Thyroid gland (tissue), 4 donors: ENCODE measurements at regions of chr9 and their contacts with region 1.

Region 1: DNA sequence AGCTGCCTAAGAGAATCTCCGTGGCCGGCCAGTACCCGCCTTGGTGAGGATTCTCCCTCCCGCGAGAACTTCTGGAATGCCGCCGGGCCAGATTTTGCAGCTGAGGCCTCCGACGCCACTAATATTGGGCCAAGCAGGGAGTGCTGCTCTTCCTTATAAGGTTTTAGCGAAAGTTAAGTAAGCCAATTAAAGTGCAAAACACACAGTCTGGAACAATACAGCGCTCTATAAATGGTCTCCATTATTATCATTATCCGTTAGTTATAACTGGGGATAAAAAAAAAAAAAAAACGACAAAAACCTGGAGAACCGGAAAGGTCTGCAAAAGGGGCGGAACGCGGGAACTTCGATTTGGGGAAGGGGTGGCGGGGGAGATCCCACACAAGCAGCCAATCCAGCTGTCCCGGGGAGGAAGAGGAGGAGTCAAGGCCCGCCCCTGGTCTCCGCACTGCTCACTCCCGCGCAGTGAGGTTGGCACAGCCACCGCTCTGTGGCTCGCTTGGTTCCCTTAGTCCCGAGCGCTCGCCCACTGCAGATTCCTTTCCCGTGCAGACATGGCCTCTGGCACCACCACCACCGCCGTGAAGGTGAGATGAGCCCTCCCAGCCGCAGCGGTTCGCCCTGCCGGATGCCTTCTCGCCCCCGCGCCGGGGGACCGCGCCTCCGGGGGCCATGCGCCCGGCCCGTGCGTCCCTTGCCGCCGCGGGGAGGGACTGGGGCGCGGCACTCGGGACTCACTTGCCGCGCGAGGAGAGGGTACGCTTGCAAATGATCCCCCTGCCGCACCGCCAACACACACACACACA is at the start of gene MTAP:
- DNase-seq: peak; percentile 95 to 96
- H3K4me3 ChIP-seq: peak within 1 kb of the TSS; percentile 70 to 81 (median 73)
- H3K27ac ChIP-seq: peak within 1 kb of the TSS; percentile 80 to 90 (median 86)
- H3K4me1 ChIP-seq: peaks cover 7 to 10% of the 10 kb centered on the region in 2 donors
- H3K27me3 ChIP-seq: no peaks in the 10 kb centered on the region
- CTCF ChIP-seq: no peak
- POLR2A ChIP-seq: peak; percentile 60 to 92
- total RNA-seq, gene MTAP: 17.1 to 24.2 (median 19.1) TPM

Region 2: DNA sequence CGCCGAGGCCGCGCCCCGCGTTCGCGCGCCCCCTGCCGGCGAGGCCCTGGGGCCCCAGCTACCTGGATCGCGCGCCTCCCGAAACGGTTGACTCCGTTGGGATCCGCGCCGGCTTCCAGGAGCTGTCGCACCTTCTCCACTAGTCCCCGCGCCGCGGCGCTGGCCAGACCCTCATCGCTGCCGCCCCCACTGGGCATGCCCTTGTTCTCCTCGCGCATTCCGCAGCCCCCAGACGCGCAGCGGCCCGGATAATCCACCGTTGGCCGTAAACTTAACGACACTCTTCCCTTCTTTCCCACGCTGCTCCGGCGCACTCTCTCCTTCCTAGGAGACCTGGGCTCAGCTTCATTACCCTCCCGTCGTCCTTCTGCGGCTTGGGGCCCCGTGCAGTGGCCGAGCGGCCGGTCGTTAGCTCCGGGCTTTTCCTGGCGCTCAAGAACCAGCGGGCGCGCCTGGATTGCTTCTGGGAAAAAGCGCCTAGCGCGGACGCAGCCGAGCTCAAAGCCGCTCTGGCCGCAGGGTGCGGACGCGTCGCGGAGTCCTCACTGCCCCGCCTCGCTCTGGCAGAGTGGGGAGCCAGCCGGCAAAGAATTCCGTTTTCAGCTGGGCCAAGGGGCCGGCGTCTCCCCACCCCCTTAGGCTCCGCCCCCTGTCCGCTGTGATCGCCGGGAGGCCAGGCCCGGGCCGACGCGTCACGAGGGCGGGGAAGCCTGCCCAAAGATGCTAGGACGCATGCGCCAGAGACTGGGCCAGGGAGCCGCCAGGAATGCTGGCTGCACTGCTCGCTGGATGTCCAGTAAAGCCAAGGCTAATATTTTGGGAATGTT is 206.6 kb after region 1 on chr9 and contains the start of gene CDKN2B:
- intact Hi-C with region 1: loop called (anchors 5 kb)
- DNase-seq: peak; percentile 91 to 94
- H3K4me3 ChIP-seq: peak within 1 kb of the TSS in 2 of 3 donors; percentile 32 to 59
- H3K27ac ChIP-seq: peak within 1 kb of the TSS in 2 of 3 donors; percentile 77 to 82
- H3K4me1 ChIP-seq: peaks cover 4 to 11% of the 10 kb centered on the region in 2 donors
- H3K27me3 ChIP-seq: peaks cover 29% of the 10 kb centered on the region
- CTCF ChIP-seq: peak; percentile 27 to 72 (median 60)
- POLR2A ChIP-seq: peak in 1 of 2 donors; percentile 70
- total RNA-seq, gene CDKN2B: 0.44 to 2.0 (median 1.2) TPM

Region 3: DNA sequence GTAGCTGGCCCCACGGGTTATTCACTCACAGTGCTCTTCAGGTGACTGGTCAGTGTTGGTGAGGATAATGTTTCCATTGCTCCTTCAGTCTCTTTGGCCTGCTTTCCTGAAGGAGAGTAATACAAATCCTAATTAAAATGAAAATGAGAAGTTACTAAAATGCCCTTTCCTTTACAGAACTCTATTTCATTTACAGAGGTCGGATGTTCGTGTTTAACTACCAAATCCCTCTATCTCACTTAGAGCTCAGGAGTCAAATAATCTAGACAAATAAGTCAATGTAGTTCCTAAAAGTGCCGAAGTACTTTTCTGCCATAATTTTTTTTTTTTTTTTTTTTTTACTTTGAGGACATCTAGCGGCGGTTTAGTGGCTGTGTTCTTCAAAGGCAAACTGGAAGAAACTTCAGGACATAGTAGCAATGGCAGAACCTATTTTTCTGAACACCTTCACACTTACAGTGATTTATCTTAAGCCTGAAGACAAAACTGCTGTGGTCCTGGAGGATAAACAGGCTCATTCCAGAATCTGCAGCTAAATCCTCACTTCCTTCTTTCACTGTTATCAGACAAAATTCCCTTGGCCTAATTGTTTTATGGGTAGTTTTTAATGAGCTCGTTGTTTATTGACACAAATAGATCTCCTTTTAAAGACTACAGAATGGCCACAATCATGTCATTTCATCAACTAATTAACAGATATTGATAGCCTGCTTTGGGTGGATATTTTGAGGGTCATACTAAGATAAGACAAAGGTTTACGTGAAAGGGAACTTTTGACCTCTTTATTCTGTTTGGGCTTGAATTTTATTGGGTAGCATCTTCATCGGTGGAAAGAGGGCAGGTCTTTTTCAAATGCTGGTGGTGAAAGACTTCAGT is 436.6 kb after region 1 on chr9:
- intact Hi-C with region 1: loop called (anchors 10 kb)
- DNase-seq: no peak
- H3K4me3 ChIP-seq: no peak overlapping the region
- H3K27ac ChIP-seq: no peak overlapping the region
- H3K4me1 ChIP-seq: no peaks in the 10 kb centered on the region
- H3K27me3 ChIP-seq: no peaks in the 10 kb centered on the region
- CTCF ChIP-seq: peak in 3 of 6 experiments; percentile 7 to 36 (median 24)
- POLR2A ChIP-seq: no peak